CD8-positive, alpha-beta T cell (primary cell): ENCODE measurements at regions of chr10 and their contacts with region 1.

Region 1: GRCh38 chr10:35854661-35855060 is 212.6 kb upstream of the FZD8 start:
- DNase-seq: no peak
- ATAC-seq: no peak
- H3K4me3 ChIP-seq: no peak overlapping the region
- H3K4me3 Mint-ChIP-seq: no peak overlapping the region
- H3K27ac ChIP-seq: no peak overlapping the region
- H3K27ac Mint-ChIP-seq: no peak overlapping the region
- H3K4me1 ChIP-seq: no peaks in the 10 kb centered on the region
- H3K4me1 Mint-ChIP-seq: no peaks in the 10 kb centered on the region
- H3K27me3 ChIP-seq: no peaks in the 10 kb centered on the region
- H3K27me3 Mint-ChIP-seq: no peaks in the 10 kb centered on the region
- CTCF ChIP-seq: no peak

Region 2: DNA sequence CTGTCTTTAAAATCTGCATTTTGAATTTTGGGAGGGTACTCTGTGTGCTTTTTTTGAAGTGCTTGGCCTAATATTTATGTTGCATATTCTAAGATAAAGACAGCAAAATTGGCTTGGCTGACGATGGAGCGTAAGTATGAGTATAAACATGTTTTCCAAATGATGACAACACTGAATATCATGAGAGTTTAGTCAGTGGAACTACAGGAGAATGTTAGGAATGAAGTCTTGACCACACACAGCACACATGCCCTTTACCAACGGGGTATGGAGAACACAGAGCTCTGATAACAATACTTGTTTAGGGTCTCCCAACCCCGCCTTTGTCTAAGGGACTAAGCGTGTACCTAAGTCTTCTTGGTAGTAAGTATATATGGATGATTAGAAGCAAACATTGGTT is 41.3 kb after region 1 on chr10:
- CTCF ChIA-PET with region 1: no interaction called
- POLR2A ChIA-PET with region 1: no interaction called
- intact Hi-C with region 1: no loop called
- DNase-seq: no peak
- ATAC-seq: no peak
- H3K4me3 ChIP-seq: no peak overlapping the region
- H3K4me3 Mint-ChIP-seq: no peak overlapping the region
- H3K27ac ChIP-seq: no peak overlapping the region
- H3K27ac Mint-ChIP-seq: no peak overlapping the region
- H3K4me1 ChIP-seq: no peaks in the 10 kb centered on the region
- H3K4me1 Mint-ChIP-seq: no peaks in the 10 kb centered on the region
- H3K27me3 ChIP-seq: no peaks in the 10 kb centered on the region
- H3K27me3 Mint-ChIP-seq: no peaks in the 10 kb centered on the region
- CTCF ChIP-seq: no peak

Region 3: GRCh38 chr10:36017137-36017829 is 162.6 kb after region 1 on chr10:
- CTCF ChIA-PET with region 1: no interaction called
- POLR2A ChIA-PET with region 1: no interaction called
- intact Hi-C with region 1: loop called in 1 of 2 experiments (anchors 5 kb)
- DNase-seq: no peak
- ATAC-seq: no peak
- H3K4me3 ChIP-seq: no peak overlapping the region
- H3K4me3 Mint-ChIP-seq: no peak overlapping the region
- H3K27ac ChIP-seq: no peak overlapping the region
- H3K27ac Mint-ChIP-seq: no peak overlapping the region
- H3K4me1 ChIP-seq: no peaks in the 10 kb centered on the region
- H3K4me1 Mint-ChIP-seq: no peaks in the 10 kb centered on the region
- H3K27me3 ChIP-seq: no peaks in the 10 kb centered on the region
- H3K27me3 Mint-ChIP-seq: no peaks in the 10 kb centered on the region
- CTCF ChIP-seq: no peak